Posterior cingulate gyrus (tissue), 11 donors: ENCODE measurements at regions of chr1 and their contacts with region 1.

Region 1: DNA sequence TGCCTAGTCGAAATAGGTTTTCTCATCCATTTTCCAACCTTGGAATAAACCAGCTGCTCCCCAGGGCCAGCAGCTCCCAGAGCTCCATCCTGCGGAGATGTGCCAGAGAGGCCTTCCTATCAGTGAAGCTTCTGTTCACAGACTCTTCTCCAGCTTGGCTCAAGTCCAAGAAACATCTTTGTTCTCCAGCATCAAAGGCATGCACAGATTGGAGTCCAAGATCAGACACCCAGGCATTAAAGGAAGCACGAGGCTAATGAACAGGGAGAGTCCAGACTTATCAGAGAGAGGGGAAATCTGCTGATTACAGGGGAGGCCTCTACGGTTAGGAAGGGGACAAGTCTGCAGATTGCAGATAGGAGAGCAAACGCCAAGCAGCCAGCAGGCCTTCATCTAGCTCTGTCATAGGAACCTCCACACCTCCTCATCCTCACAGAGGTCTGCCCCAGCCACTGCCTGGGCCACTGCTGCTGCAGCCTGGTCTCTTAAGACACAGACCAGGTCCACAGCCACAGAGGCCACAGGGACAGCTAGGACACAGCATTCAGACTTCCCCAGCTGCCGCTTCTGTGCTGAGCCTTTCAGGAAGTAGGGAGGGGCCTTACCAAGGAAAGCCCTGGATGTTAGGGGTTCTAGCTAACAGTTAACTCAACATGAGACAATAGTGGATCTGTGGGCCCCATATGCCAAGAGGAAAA is 3.4 kb downstream of the PRR9 start:
- DNase-seq: peak in 5 of 10 donors; percentile 11 to 84 (median 36)

Region 2: DNA sequence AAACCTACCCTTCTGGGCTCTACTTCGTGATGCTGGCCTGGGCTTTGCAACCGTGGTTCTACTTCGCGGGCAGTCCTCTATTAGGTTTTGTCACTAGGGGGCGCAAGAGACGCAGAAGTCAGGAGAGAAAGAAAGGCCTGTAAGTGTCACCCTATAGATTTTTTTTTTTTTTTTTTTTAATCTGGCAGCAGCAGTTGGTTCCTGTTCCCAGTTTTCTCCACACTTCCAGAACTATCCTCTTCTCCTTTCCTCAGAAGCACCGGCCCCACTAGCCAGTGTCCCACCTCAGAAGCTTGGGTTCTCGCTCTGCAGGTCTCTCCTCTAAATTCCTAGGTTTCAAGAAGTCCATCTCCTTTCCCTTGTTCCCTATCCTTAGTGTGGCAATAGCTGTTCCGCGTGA is 566.6 kb before region 1 on chr1:
- intact Hi-C with region 1: loop called (anchors 5 kb)
- DNase-seq: peak in 9 of 10 donors; percentile 17 to 88 (median 55)

Region 3: GRCh38 chr1:152869808-152870419 is 350.8 kb before region 1 on chr1:
- intact Hi-C with region 1: loop called (anchors 5 kb)
- DNase-seq: peak in 9 of 10 donors; percentile 23 to 88 (median 69)

Region 4: DNA sequence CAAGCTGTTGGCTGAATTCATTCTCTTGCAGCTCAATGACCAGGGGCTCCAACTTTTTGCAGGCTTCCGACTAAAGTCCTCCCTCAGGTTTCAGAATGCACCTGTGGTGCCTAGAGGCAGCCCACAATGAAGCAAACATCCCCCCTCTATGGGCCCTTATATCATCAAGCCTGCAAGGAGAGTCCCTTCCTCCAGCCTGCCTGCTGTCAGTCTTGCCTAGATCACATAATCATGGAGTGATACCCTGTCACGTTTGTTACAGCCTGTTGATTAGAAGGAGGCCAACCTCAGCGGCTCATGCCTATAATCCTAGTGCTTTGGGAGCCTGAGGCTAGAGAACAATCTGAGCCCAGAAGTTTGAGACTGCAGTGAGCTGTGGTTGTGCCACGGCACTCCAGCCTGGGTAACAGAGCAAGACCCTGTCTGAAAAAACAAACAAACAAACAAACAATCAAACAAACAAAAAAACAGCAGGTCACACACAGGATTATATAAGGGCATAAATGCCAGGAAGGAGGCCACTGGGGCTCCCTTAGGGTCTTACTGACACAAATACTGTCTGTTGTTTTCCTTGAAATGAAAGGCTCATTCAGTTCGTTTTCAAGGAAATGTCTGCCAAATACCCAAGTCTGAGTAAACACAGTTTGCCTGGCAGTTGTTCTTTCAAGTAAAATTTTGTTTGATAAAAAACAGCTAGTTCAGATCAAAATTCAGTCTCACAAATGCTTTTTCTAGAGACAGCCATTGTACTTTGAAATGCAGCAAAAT is 223.9 kb before region 1 on chr1:
- intact Hi-C with region 1: loop called (anchors 10 kb)
- DNase-seq: no peak

Region 5: DNA sequence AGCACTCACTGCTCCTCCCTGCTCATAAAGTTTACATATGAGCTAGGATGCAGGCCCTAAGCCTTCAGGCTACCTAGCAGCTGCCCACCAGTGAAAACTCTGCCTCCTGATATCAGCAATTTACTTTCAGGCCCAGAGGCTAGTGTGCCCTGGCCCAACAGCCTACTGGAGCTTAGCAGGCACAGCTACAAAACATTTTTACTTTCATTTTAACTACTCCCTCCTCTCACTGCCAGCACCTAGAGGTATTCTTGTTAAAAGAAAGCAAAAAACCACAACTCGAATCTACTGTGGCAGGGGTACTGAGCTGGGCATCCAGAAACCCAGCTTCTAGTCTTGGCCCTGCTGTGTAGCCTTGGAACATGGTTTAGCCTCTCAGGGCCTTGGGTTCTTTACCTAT is 32.9 kb after region 1 on chr1:
- intact Hi-C with region 1: no loop called
- DNase-seq: no peak

Region 6: DNA sequence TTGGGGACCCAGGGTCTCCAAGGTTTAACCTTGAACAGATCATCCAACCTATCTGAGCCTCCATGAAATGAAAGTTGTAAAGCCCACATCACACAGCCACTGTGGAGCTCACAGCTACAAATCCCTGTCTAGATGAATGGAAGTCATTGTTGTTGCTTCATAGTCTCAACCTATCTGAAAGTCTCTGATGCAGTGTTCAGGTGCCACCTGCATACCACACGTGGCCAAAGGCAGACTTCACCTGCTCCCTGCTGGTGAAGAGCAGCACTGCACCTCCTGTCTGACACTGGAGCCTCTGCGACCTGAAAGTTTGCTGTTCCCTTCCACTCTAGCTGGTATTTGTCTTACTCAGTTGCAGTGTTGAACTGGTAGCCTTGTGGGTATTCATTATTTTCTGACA is 57.1 kb after region 1 on chr1:
- intact Hi-C with region 1: no loop called
- DNase-seq: no peak

Region 7: DNA sequence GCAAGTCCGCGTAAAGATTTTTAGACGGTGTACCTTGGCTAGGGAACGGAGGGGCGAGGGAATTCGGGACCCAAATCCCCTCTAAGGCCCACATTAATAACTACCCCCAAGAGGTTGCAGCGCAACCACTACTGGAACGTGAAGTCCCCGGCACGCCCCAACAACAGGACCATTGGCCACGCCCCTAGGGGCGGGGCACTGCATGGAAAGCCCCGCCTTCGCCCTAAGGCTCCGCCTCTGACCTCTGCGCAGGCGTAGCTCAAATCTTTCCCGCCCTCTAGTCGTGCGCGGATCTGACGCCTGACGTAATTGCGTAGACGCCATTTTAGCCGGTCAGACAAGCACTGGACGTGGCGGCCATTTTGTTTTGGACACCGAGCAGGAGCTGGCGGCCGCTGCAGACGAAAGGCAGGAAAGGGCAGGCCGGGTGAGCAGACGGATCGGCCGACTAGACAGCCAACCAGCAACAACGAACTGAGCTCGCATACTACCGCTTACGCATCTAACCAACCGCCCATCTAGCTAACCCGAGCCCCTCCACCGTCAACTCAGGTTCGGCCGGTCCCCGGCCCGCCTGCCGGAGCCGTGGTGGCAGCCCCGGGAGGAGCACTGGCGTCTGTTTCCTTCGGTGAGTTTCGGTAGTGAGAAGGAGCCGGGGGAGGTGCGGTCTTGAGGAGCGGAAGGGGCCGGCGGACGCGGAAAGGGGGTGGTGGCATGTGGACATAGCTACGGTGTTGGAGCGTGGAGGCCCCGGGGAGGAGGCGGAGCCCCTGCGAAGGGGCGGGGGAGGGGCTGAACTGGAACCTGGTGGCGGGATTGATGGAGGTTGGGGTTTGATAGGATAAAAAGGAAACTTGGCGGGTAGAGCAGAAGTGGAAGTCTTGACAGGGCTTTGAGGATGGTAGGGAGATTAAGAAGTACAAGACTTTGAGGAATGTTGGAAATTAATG is 413.2 kb after region 1 on chr1 and contains the start of gene CHTOP:
- intact Hi-C with region 1: no loop called
- DNase-seq: peak; percentile 96 to 100 (median 99)